Heart left ventricle (tissue), 16 donors: ENCODE measurements at regions of chr5 and their contacts with region 1.

Region 1: DNA sequence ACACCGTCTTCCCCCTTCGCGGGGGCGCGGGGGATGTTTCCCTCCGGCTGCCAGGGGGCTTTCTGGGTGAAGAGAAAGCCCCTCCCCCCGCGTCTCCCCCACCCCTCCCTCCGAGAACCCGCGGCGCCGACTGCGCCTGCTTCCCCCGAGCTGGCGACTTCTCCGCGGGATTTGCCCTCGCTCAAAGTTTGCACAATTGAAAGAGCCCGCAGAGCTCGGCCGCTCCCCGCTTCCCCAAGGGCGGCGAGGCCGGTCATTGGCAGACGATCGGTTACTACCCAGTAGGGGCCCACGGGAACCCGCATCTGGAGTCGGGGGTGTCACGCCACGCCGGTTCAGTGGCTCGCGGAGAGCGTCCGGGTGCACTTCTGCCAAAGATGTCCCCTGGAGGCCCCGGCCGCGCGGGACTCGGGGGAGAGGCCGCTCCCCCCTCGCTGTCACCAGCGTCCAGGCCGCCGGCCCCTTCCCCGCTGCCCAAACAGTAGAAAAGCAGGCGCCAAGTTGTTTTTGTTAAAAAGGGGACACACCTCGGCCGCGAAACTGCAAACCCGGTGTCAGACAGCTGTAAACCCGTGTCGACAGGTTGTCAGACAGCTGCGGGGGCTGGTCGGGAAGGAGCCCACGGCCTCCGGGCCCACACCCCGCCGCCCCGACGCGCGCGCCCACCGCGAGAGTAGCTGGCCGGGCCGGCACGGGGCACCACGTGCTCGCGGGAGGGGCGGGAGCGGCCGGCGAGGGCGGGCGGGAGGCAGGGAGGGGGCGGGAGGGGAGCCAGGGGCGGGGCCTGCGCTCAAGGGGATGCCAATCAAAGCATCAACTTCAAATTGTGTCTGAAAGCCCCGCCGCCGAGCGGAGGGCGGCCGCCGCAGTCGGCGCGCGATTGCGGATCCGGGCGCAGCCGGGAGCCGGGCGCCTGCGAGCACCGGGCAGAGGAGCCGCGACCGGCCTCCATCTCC is at the start of gene IRX1:
- DNase-seq: no peak
- ATAC-seq: peak in 1 of 4 donors; percentile 64
- H3K4me3 ChIP-seq: peak within 1 kb of the TSS in 10 of 12 donors; percentile 17 to 46 (median 32)
- H3K27ac ChIP-seq: peak within 1 kb of the TSS in 1 of 12 donors; percentile 51
- H3K4me1 ChIP-seq: peaks cover 0 to 53% (median 11%) of the 10 kb centered on the region in 12 donors
- H3K27me3 ChIP-seq: peaks cover 74 to 100% (median 96%) of the 10 kb centered on the region in 9 donors
- CTCF ChIP-seq: no peak
- POLR2A ChIP-seq: no peak
- total RNA-seq, gene IRX1: 0.15 to 1.5 (median 0.34) TPM in 8 of 9 donors, not detected in the other

Region 2: DNA sequence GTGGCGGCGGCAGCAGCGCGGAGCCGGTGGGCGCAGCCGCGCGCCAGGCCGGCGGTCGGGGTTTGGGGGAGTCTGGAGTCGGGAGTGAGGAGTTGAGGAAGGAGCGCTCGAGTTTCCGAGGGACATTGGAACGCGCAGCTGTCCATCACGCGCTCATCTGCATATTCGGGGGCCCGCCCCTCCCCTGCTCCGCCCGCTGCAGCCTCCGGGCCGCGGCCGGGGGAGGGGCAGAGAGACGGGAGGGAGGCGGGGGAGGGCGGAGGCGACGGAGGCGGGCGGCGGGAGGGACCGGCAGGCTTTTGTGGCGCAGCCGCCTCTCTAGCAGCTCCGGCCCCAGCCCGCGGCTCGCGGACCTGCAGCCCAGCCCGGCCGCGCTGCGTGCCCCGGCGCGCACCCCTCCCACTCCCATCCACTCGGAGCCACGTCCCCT is 843.7 kb before region 1 on chr5 and contains the start of gene IRX2:
- intact Hi-C with region 1: loop called in 3 of 10 experiments (anchors 10 kb)
- DNase-seq: peak; percentile 60 to 93 (median 85)
- ATAC-seq: peak; percentile 72 to 96 (median 93)
- H3K4me3 ChIP-seq: peak within 1 kb of the TSS; percentile 17 to 59 (median 45)
- H3K27ac ChIP-seq: peak within 1 kb of the TSS in 8 of 12 donors; percentile 10 to 82 (median 54)
- H3K4me1 ChIP-seq: peaks cover 0 to 59% (median 10%) of the 10 kb centered on the region in 12 donors
- H3K27me3 ChIP-seq: peaks cover 44 to 97% (median 84%) of the 10 kb centered on the region in 9 donors
- CTCF ChIP-seq: no peak
- POLR2A ChIP-seq: no peak
- total RNA-seq, gene IRX2: 0.17 to 3.7 (median 0.56) TPM

Region 3: DNA sequence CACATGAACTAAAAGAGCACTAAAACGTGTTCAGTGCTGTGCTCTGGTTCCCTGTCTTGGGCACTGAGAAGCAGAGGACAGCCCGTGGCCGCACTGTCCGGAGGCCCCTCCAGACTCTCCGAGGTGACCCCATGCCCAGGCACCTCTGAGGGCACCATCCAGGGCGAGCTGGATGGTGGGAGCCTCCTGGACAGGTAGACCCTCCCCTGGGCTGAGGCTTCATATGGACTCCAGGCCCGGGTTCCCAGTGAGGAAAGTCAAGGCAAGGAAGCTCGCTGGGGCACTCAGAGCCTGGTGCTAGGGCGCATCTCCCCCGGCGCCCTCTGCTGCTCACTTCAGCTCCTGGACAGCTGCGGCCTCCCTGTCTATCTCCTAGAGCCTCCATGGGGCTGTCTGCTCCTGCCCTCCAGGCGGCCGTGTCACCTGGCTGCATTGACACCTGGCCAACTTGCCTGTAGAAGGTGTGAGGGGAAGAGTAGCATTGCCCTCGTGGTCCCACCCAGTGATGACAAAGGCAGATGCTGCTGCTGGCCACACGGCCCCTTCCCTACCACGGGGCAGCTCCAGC is 177.8 kb before region 1 on chr5:
- intact Hi-C with region 1: no loop called
- DNase-seq: peak in 1 of 5 donors; percentile 28
- ATAC-seq: no peak
- H3K4me3 ChIP-seq: no peak overlapping the region
- H3K27ac ChIP-seq: no peak overlapping the region
- H3K4me1 ChIP-seq: no peaks in the 10 kb centered on the region
- H3K27me3 ChIP-seq: no peaks in the 10 kb centered on the region
- CTCF ChIP-seq: no peak
- POLR2A ChIP-seq: no peak